WTC11 (cell line): ENCODE measurements at regions of chr10 and their contacts with region 1.

Region 1: GRCh38 chr10:34994565-34995142 is 95.5 kb downstream of the CUL2 start:
- DNase-seq: peak; percentile 74
- ATAC-seq: peak; percentile 87
- H3K4me3 Mint-ChIP-seq: no peak overlapping the region
- H3K27ac Mint-ChIP-seq: peak overlapping the region; percentile 16; the same call in 1 of the 2 replicates
- H3K4me1 Mint-ChIP-seq: peaks cover 23% of the 10 kb centered on the region
- H3K27me3 Mint-ChIP-seq: peaks cover 2% of the 10 kb centered on the region
- CTCF ChIP-seq: peak; percentile 54

Region 2: GRCh38 chr10:34615770-34616169 is 378.9 kb before region 1 on chr10:
- CTCF ChIA-PET with region 1: no interaction called
- POLR2A ChIA-PET with region 1: no interaction called
- DNase-seq: no peak
- ATAC-seq: no peak
- H3K4me3 Mint-ChIP-seq: no peak overlapping the region
- H3K27ac Mint-ChIP-seq: no peak overlapping the region
- H3K4me1 Mint-ChIP-seq: peaks cover 67% of the 10 kb centered on the region
- H3K27me3 Mint-ChIP-seq: no peaks in the 10 kb centered on the region
- CTCF ChIP-seq: no peak

Region 3: DNA sequence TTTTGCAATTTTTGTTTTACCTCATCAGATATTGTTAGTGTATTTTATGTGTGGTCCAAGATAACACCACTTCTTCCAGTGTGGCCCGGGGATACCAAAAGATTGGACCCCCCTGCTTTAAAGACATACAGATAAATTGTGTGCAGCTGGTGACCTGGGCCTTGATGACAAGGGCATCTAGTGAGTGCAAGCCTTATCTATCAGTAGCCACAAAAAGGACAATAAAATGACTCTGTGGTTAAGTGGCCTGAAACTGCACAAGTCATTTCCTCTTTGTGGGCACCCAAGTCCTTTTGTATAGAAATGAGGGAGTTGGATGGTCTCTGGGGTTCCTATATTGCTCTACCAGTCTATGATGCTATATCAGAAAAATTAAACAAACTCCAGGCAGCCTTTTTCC is 277.7 kb before region 1 on chr10:
- CTCF ChIA-PET with region 1: no interaction called
- POLR2A ChIA-PET with region 1: interaction called, 12 read pairs
- DNase-seq: no peak
- ATAC-seq: no peak
- H3K4me3 Mint-ChIP-seq: no peak overlapping the region
- H3K27ac Mint-ChIP-seq: no peak overlapping the region
- H3K4me1 Mint-ChIP-seq: peaks cover 26% of the 10 kb centered on the region
- H3K27me3 Mint-ChIP-seq: no peaks in the 10 kb centered on the region
- CTCF ChIP-seq: no peak

Region 4: DNA sequence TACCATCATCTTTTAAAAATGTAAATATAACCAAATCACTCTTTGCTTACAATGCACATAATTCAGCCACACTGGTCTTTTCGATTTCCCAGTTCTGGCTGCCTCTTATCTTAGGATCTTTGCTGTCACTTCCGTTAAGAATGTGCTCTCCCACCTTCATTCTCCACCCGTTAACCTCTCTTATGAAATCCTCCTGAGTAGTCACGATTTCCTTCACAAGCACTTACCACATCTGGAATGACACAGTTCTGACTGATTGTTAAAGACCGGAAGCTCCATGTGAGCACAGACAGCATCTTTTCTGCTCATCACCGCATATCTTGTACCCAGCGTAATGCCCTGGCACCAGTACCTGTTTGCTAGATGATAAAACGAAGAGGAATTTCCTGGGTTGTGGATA is 11.2 kb after region 1 on chr10:
- CTCF ChIA-PET with region 1: interaction called, 21 read pairs
- POLR2A ChIA-PET with region 1: no interaction called
- DNase-seq: no peak
- ATAC-seq: no peak
- H3K4me3 Mint-ChIP-seq: no peak overlapping the region
- H3K27ac Mint-ChIP-seq: no peak overlapping the region
- H3K4me1 Mint-ChIP-seq: peaks cover 25% of the 10 kb centered on the region
- H3K27me3 Mint-ChIP-seq: no peaks in the 10 kb centered on the region
- CTCF ChIP-seq: no peak

Region 5: DNA sequence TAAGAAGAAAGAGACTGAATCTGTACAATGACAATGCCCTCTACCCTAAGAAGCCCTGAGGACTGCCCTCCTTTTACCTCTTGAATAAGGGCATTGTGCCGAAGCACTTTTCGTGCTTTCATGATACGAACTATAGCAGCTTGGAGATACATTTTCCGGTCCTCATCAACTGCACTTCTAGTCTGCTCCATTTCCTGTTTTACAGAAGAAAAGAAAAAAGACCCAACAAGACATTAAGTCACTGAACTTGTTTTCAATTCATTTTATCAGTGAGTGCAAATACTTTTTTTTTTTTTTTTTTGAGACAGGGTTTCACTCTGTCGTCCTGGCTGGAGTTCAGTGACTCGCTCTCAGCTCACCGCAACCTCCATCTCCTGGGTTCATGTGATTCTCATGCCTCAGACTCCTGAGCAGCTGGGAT is 17.1 kb after region 1 on chr10:
- CTCF ChIA-PET with region 1: interaction called, 32 read pairs
- POLR2A ChIA-PET with region 1: interaction called, 6 read pairs
- DNase-seq: no peak
- ATAC-seq: no peak
- H3K4me3 Mint-ChIP-seq: no peak overlapping the region
- H3K27ac Mint-ChIP-seq: no peak overlapping the region
- H3K4me1 Mint-ChIP-seq: peaks cover 29% of the 10 kb centered on the region
- H3K27me3 Mint-ChIP-seq: no peaks in the 10 kb centered on the region
- CTCF ChIP-seq: no peak

Region 6: GRCh38 chr10:35027567-35027966 is 32.9 kb after region 1 on chr10:
- CTCF ChIA-PET with region 1: interaction called, 66 read pairs
- POLR2A ChIA-PET with region 1: no interaction called
- DNase-seq: no peak
- ATAC-seq: no peak
- H3K4me3 Mint-ChIP-seq: no peak overlapping the region
- H3K27ac Mint-ChIP-seq: no peak overlapping the region
- H3K4me1 Mint-ChIP-seq: no peaks in the 10 kb centered on the region
- H3K27me3 Mint-ChIP-seq: no peaks in the 10 kb centered on the region
- CTCF ChIP-seq: no peak; the same call in 1 of the 2 replicates

Region 7: GRCh38 chr10:35126530-35127296 is 132.1 kb after region 1 on chr10 and contains the start of gene CREM:
- CTCF ChIA-PET with region 1: interaction called, 12 read pairs
- POLR2A ChIA-PET with region 1: no interaction called
- DNase-seq: peak; percentile 99
- ATAC-seq: peak; percentile 94
- H3K4me3 Mint-ChIP-seq: peak within 1 kb of the TSS; percentile 87
- H3K27ac Mint-ChIP-seq: peak within 1 kb of the TSS; percentile 97
- H3K4me1 Mint-ChIP-seq: peaks cover 13% of the 10 kb centered on the region
- H3K27me3 Mint-ChIP-seq: no peaks in the 10 kb centered on the region; the same call in 1 of the 2 replicates
- CTCF ChIP-seq: peak; percentile 94
- total RNA-seq, gene CREM: 17.3 to 23.6 TPM (median 18.3 TPM) in 3 replicates

Region 8: GRCh38 chr10:35218339-35218955 is 223.8 kb after region 1 on chr10:
- CTCF ChIA-PET with region 1: interaction called, 11 read pairs
- POLR2A ChIA-PET with region 1: no interaction called
- DNase-seq: peak; percentile 81
- ATAC-seq: peak; percentile 66
- H3K4me3 Mint-ChIP-seq: no peak overlapping the region
- H3K27ac Mint-ChIP-seq: no peak overlapping the region
- H3K4me1 Mint-ChIP-seq: no peaks in the 10 kb centered on the region
- H3K27me3 Mint-ChIP-seq: no peaks in the 10 kb centered on the region
- CTCF ChIP-seq: peak; percentile 74